Caki2 (cell line): ENCODE measurements at regions of chr17 and their contacts with region 1.

Region 1: DNA sequence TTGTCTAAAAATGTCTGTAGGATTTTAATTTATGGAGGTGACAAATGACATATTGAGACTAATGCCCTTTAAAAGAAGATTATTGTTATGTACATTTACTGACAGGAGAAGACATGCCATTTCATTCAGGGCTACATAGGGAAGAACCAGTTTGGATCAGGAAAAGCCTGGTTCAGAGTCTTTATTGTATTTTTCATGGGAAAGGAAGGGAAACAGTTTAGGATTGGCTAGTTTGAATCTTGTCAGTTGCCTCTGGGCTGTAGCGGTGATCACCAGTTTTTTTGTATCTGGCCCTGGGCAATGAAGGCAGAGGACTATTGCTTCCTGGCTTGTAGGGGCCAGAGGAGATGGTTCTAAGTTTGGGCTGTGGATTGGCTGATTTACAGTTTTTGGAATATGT is 31.8 kb downstream of the NSRP1 start:
- DNase-seq: no peak

Region 2: DNA sequence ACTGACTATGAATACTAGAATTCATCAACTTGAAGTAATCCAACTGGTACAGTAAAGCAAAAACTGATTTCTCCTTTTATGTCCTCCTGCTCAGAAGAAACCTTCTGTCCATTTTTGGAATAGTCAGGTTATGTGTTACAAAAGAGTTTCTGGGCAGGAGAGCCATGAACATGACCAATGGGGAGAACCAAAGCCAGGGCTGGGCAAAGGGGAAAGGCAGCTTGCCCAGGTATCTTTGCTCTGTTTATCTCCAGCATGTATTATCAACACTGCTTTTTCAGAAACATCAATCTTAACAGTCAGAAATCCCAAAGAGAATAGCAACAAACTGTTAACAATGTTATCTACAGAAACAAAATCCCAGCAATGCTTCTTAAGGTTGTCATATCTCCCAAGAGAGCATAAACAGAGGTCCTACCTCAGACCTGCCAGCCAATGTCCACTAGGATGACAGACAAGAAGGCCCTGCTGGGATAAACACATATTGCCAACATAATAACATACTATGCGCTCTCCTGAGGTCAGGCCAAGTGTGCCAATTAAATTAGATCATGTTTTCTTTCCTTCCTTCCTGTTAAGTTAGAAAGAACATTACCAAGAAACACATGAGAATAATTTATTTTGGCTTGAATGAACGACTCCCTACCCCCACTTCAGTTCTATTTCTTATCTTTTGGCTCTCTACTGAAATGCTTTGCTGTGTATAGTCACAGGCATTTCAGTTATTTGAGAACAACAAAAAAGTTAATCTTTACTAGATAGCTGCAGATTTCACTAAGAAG is 115.4 kb after region 1 on chr17:
- in situ Hi-C with region 1: loop called (anchors 25 kb)
- DNase-seq: peak; percentile 93